PC-9 (cell line): ENCODE measurements at regions of chr3 and their contacts with region 1.

Region 1: DNA sequence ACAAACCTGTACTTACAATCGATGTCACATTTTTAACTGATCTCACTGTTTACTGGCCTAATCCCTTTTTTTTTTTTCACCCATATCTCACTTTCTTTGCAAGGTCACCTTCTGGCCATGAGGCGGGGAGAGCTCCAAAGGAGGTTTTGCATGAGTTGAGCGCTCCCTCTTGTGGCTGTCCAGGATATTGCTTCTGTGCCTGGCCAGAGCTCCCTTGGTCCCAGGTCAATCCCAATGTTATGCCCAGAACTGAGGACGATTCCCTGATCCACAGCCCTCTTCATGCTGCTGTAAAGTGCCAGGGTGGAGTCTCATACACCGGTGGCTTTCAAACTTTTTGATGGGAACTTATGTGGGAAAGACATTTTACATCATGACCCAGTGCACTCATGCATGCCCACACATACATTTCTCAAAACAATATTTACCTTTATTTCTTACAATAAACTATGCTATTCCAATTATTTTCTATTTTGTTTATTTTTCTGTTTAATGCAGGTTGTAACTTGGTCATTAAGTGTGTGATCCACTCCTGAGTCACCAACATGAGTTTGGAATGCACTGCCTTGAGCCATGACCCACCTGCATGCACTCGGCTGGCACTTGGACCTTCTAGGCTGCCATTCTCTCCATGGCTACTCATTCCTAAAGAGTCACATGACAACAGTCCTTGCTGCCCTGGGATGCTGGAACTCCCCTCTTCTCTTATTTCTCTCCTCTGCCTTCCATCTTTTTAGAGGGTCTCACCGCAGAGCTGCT is 9.6 kb upstream of the SST start:
- DNase-seq: peak; percentile 71 to 79
- H3K4me3 ChIP-seq: no peak overlapping the region
- H3K27ac ChIP-seq: no peak overlapping the region
- H3K4me1 ChIP-seq: no peaks in the 10 kb centered on the region
- H3K27me3 ChIP-seq: peaks cover 47% of the 10 kb centered on the region
- CTCF ChIP-seq: peak; percentile 96

Region 2: GRCh38 chr3:186849374-186849975 is 830.3 kb before region 1 on chr3:
- CTCF ChIA-PET with region 1: interaction called, 11 read pairs
- POLR2A ChIA-PET with region 1: no interaction called
- intact Hi-C with region 1: loop called (anchors 2 kb)
- DNase-seq: peak in 1 of 2 experiments; percentile 52
- H3K4me3 ChIP-seq: no peak overlapping the region
- H3K27ac ChIP-seq: no peak overlapping the region
- H3K4me1 ChIP-seq: no peaks in the 10 kb centered on the region
- H3K27me3 ChIP-seq: 0 out of 2 replicates have a peak, but pooled peaks cover 7% of the 10 kb centered on the region
- CTCF ChIP-seq: peak; percentile 81

Region 3: DNA sequence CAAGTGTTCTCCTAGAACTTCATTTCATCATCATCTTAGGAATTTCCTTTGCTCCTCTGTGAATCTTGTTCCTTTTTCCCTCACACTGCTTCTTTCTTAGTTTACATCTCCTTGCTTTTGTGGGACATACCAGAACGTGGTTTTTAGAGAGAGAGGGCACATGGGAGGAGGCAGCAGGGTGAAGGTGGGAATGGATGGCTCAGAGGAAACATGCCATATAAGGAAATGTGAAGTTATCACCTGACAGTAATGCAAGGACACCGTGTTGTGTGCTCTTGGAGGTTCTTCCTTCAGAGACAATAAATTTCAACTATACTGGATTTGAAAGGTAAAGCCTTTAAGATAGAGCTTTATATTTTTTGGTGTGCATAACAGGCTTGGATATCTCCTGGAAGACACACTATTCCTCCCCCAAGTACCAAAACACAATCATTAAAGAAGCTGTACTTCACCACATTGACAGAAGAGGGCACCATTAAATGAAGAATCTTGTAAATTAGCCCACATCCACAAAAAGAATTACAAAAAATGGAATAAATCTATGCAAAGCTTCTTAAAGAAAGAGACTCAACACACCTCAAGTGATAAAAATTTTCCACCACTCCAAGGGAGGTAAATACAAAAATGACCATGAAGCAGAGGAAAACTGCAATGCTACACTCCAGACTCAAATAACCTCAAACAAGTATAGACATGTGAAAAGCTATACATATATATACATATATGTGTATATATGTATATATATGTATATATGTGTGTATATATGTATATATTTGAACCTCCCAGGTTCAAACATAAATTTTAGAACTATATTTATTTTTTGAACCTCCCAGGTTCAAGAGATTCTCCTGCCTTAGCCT is 566.7 kb before region 1 on chr3:
- CTCF ChIA-PET with region 1: interaction called, 6 read pairs
- POLR2A ChIA-PET with region 1: interaction called, 5 read pairs
- intact Hi-C with region 1: loop called (anchors 1 kb)
- DNase-seq: no peak
- H3K4me3 ChIP-seq: no peak overlapping the region
- H3K27ac ChIP-seq: no peak overlapping the region
- H3K4me1 ChIP-seq: no peaks in the 10 kb centered on the region
- H3K27me3 ChIP-seq: no peaks in the 10 kb centered on the region
- CTCF ChIP-seq: peak; percentile 88

Region 4: GRCh38 chr3:187319699-187320302 is 360.0 kb before region 1 on chr3:
- CTCF ChIA-PET with region 1: interaction called, 81 read pairs
- POLR2A ChIA-PET with region 1: no interaction called
- intact Hi-C with region 1: loop called (anchors 1 kb)
- DNase-seq: peak; percentile 64 to 72
- H3K4me3 ChIP-seq: no peak overlapping the region
- H3K27ac ChIP-seq: no peak overlapping the region
- H3K4me1 ChIP-seq: no peaks in the 10 kb centered on the region
- H3K27me3 ChIP-seq: peaks cover 41% of the 10 kb centered on the region
- CTCF ChIP-seq: peak; percentile 85

Region 5: GRCh38 chr3:187465503-187465902 is 214.3 kb before region 1 on chr3:
- CTCF ChIA-PET with region 1: no interaction called
- POLR2A ChIA-PET with region 1: no interaction called
- intact Hi-C with region 1: no loop called
- DNase-seq: no peak
- H3K4me3 ChIP-seq: no peak overlapping the region
- H3K27ac ChIP-seq: no peak overlapping the region
- H3K4me1 ChIP-seq: no peaks in the 10 kb centered on the region
- H3K27me3 ChIP-seq: peaks cover 18% of the 10 kb centered on the region; the same call in 1 of the 2 replicates
- CTCF ChIP-seq: no peak

Region 6: DNA sequence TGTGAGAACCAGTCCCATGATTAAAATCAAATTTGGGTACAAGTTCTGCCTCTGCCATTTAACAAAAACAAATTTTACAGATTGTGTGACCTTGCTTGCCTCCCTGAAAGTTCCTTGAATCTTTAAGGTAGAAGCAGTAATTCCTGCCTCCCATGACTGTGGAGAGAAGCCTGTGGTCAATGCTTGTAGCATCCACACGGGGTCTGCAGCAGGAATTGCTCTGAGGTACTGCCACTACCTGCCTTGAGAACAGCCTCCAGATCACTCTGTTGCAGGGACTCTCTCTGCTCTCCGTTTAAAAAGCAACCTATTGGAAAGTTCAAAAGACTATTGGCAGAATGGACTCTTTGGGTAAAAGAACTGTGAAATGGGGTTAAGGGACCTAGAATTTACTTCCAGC is 85.5 kb before region 1 on chr3:
- CTCF ChIA-PET with region 1: no interaction called
- POLR2A ChIA-PET with region 1: interaction called, 17 read pairs
- intact Hi-C with region 1: no loop called
- DNase-seq: no peak
- H3K4me3 ChIP-seq: no peak overlapping the region
- H3K27ac ChIP-seq: no peak overlapping the region
- H3K4me1 ChIP-seq: no peaks in the 10 kb centered on the region
- H3K27me3 ChIP-seq: peaks cover 75% of the 10 kb centered on the region
- CTCF ChIP-seq: no peak

Region 7: GRCh38 chr3:187714404-187714979 is 34.7 kb after region 1 on chr3:
- CTCF ChIA-PET with region 1: no interaction called
- POLR2A ChIA-PET with region 1: no interaction called
- intact Hi-C with region 1: loop called (anchors 1 kb)
- DNase-seq: peak; percentile 74 to 82
- H3K4me3 ChIP-seq: no peak overlapping the region
- H3K27ac ChIP-seq: no peak overlapping the region
- H3K4me1 ChIP-seq: no peaks in the 10 kb centered on the region
- H3K27me3 ChIP-seq: no peaks in the 10 kb centered on the region
- CTCF ChIP-seq: peak; percentile 99

Region 8: GRCh38 chr3:187725653-187726370 is 46.0 kb after region 1 on chr3:
- CTCF ChIA-PET with region 1: no interaction called
- POLR2A ChIA-PET with region 1: no interaction called
- intact Hi-C with region 1: no loop called
- DNase-seq: no peak
- H3K4me3 ChIP-seq: no peak overlapping the region
- H3K27ac ChIP-seq: no peak overlapping the region
- H3K4me1 ChIP-seq: no peaks in the 10 kb centered on the region
- H3K27me3 ChIP-seq: no peaks in the 10 kb centered on the region
- CTCF ChIP-seq: no peak